Endothelial cell of umbilical vein (primary cell): ENCODE measurements at regions of chrX and their contacts with region 1.

Region 1: DNA sequence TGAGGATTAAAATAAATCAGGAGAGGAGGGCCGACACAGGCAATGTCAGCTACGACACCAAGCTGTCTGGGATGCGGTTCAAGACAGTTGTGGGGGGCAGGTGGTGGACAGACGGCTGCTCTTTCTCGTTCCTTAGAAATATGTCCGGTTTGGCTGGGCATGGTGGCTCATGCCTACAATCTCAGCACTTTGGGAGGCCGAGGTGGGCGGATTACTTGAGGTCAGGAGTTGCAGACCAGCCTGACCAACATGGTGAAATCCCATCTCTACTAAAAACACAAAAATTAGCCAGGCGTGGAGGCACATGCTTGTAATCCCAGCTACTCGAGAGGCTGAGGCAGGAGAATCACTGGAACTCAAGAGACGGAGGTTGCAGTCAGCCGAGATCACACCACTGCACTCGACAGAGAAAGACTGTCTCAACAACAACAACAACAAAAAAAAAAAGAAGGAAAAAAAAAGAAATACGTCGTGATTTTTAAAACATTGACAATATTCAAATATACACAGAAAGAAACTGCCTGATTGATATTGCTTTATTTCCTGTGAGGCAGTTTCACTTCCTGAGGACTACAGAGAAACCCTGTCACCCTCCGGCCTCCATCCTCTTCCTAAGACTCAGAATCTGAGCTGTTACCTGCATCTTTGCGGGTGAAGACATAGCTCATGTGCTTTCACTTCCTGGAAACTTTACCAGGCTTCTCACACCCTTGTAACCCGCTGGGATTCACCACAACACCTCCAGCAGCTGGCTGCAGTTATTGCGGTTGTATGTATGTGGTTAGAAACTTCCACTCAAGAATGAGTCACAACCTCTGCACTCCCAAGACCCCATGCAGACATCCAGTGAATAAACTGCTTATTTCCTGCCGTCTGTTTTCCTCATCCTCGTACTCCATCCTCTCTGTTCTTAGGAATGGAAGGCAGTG is 63.8 kb upstream of the STS start:
- DNase-seq: peak; percentile 71
- H3K4me3 ChIP-seq: no peak overlapping the region
- H3K27ac ChIP-seq: peak overlapping the region; percentile 61
- H3K4me1 ChIP-seq: peaks cover 13% of the 10 kb centered on the region
- H3K27me3 ChIP-seq: no peaks in the 10 kb centered on the region
- CTCF ChIP-seq: no peak
- POLR2A ChIP-seq: no peak

Region 2: DNA sequence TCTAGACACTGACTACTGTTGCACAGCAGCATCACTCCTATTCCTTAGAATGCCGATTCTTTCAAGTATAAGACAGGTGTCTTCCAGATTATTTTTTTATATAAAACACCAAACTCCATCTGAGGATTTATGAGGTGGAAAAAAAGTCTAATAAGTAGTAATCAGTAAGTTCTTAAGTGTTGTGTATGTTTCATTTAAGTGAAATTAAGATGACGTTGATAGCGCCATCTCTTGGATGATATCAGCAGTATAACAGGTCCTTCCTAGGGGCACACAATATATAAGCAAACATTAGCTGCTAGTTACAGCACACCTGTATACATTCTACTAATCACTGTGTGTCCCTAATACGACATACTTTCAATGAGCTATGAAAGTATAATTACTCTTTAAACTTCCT is 35.8 kb before region 1 on chrX:
- CTCF ChIA-PET with region 1: no interaction called
- POLR2A ChIA-PET with region 1: no interaction called
- dilution Hi-C with region 1: no loop called
- intact Hi-C with region 1: no loop called
- DNase-seq: no peak
- H3K4me3 ChIP-seq: no peak overlapping the region
- H3K27ac ChIP-seq: no peak overlapping the region
- H3K4me1 ChIP-seq: no peaks in the 10 kb centered on the region
- H3K27me3 ChIP-seq: no peaks in the 10 kb centered on the region
- CTCF ChIP-seq: no peak
- POLR2A ChIP-seq: no peak

Region 3: DNA sequence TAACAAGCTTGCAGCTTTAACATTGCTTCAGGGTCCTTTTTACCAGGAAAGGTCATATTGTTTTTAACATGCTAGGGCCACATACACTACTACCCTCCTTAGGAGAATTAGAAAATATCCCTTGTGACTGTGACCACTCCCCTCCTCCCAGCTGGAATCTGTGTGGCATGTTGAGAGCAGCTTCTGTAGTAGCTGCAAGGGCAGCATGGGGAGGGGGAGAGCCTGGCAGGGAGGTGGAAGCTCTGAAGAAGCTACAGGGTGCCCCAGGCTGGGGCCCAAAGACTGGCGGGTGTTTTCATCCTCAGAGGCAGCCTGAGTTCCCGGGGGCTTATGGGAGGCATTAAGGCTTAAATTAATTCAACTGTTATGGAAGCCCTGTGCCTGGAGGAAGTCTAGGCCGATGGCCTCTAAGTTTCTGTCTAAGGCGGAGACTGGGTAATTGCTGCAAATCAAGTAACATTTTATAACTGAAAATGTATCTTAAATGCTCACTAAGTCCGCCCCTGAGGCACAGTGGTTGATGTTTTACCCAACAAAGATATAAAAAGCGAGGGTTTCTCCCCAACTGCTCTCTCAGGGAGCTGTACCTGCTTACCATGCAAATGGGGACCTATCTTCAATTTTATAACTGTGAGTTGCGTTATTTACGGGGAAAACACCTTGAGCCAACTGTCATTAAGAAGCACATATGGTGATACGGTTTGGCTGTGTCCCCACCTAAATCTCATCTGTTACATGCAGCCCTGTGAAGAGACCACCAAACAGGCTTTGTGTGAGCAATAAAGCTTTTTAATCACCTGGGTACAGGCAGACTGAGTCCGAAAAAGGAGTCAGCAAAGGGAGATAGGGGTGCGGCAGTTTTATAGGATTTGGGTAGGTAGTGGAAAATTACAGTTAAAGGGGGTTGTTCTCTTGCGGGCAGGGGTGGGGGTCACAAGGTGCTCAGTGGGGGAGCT is 26.4 kb after region 1 on chrX:
- CTCF ChIA-PET with region 1: interaction called, 4 read pairs
- POLR2A ChIA-PET with region 1: no interaction called
- dilution Hi-C with region 1: no loop called
- intact Hi-C with region 1: loop called (anchors 1 kb)
- DNase-seq: no peak
- H3K4me3 ChIP-seq: peak overlapping the region in 1 of 3 experiments; percentile 11
- H3K27ac ChIP-seq: peak overlapping the region; percentile 93
- H3K4me1 ChIP-seq: peaks cover 28% of the 10 kb centered on the region
- H3K27me3 ChIP-seq: no peaks in the 10 kb centered on the region
- CTCF ChIP-seq: no peak
- POLR2A ChIP-seq: no peak

Region 4: DNA sequence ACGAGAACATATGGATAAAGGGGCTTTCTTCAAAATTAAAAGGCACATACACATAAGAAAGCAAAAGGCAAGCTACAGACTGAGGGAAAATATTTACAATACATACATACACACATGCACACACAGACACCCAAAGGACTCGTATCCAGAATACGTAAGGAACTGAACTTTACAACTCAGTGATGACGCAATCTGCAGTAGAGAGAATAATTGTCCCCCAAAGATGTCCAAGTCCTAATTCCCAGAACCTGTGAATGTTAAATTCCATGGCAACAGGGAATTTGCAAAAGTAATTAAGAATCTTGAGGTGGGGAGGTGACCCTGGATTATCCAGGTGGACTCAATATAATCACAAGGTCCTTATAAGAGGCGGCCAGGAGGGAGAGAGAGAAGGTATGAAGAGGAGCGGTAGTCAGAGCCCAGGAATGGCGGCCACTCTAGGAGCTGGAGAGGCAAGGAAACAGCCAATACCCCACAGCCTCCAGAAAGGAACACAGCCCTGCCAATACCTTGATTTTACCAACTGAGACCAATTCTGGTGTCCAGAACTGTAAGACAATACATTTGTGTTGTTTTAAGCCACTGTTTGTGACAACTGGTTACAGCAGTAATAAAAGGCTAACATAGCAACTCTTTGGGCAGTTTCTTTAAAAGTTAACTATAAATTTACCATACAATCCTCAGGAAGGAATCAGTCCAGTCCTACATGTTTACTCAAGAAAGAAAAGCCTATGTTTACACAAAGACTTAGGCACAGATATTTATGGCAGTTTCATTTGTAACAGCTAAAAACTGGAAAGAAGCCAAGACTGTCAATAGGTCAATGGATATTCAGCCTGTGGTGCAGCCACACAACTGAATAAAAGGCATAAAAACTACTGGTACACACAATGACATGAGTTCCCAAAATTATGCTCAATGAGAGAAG is 36.5 kb after region 1 on chrX:
- CTCF ChIA-PET with region 1: no interaction called
- POLR2A ChIA-PET with region 1: no interaction called
- dilution Hi-C with region 1: no loop called
- intact Hi-C with region 1: loop called (anchors 5 kb)
- DNase-seq: peak; percentile 76
- H3K4me3 ChIP-seq: no peak overlapping the region
- H3K27ac ChIP-seq: peak overlapping the region; percentile 32
- H3K4me1 ChIP-seq: peaks cover 27% of the 10 kb centered on the region
- H3K27me3 ChIP-seq: no peaks in the 10 kb centered on the region
- CTCF ChIP-seq: no peak
- POLR2A ChIP-seq: no peak

Region 5: DNA sequence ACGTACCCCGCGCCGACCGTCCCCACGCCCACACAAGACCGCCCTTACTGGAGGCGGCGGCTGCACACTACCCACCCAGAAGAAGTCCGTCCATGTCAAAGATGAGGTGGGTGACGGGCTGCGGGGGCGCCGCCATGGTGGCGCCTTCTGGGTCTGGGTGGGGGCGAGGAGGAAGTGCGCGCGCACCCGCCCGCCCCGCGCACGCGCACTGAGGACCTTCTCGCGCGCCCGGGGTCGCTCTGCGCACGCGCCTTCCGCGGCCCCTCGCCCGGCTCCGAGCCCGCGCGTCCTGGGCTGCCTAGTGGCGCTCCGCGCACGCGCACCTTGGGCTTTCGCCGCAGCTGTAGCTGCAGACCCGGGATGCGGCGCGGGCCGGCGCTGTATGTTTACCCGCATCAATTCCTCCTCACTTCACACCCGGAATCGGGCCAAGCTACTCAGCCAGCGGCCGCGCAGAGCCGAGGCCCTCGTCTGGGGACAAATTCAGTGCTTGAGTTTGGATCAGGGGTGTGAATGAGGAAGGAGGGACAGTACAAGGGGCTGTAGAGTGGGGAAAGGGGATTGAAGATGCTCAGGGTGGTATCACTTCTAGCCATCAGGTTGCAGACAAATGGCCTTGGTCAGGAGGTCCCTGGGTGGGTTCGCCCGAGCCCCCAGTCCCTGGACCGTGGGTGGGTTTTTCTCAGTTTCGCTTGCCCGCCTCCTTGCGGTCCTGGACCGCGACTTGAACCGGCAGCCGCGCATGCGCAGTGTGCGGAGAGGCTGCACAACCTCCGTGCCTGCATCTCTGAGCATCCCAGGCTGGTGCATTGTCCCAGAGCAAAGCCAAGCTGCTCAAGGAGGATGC is 64.5 kb after region 1 on chrX and contains the start of gene PUDP:
- CTCF ChIA-PET with region 1: no interaction called
- POLR2A ChIA-PET with region 1: no interaction called
- dilution Hi-C with region 1: no loop called
- intact Hi-C with region 1: loop called (anchors 5 kb)
- DNase-seq: peak; percentile 77
- H3K4me3 ChIP-seq: peak within 1 kb of the TSS; percentile 25 to 86 (median 67)
- H3K27ac ChIP-seq: peak within 1 kb of the TSS; percentile 58
- H3K4me1 ChIP-seq: no peaks in the 10 kb centered on the region
- H3K27me3 ChIP-seq: no peaks in the 10 kb centered on the region
- CTCF ChIP-seq: peak in 1 of 2 donors; percentile 39
- POLR2A ChIP-seq: peak; percentile 64
- total RNA-seq, gene PUDP: 22.5 and 24.5 TPM in 2 replicates